Activated T-helper 2 cell treated with anti-CD3 and anti-CD28 coated beads, Interferon-gamma antibody, Interleukin-2, Interleukin-4, amounts not matched to agents 10 μg/mL and 5 μg/mL and 100 μg/mL, durations not matched to agents 14 hours and 24 hours and 36 hours (primary cell): ENCODE measurements at regions of chr4 and their contacts with region 1.

Region 1: GRCh38 chr4:113328514-113328913 is 279.1 kb downstream of the ANK2 start:
- DNase-seq: no peak
- H3K4me3 Mint-ChIP-seq: no peak overlapping the region
- H3K27ac Mint-ChIP-seq: no peak overlapping the region
- H3K4me1 Mint-ChIP-seq: peaks cover 4% of the 10 kb centered on the region
- H3K27me3 Mint-ChIP-seq: peaks cover 24% of the 10 kb centered on the region

Region 2: DNA sequence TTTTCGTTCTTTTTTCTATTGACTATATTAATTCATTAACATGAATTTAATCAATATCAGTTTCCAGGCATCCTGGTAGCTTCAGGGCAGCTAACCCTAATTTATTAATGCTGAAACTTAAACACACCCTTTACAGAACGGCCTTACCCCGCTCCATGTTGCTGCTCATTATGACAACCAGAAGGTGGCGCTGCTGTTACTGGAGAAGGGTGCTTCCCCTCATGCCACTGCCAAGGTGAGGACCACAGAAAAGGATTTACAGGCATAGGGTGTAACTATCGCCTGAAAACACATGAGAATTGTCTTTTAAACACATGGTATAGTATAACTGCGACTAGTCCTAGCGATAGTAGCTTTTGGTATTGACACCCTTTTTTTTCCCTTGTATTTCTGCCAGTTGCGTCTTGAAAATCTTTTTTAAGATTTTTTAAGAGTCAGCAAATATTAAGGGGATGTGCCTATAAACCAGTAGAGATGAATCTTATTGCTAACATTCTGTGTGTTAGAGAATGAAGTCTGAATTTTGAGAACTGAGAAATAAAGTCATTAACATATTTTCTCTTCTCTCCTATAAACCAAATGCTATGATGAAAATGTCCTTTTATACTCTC is 50.1 kb before region 1 on chr4:
- intact Hi-C with region 1: loop called (anchors 2 kb)
- DNase-seq: peak; percentile 39
- H3K4me3 Mint-ChIP-seq: no peak overlapping the region
- H3K27ac Mint-ChIP-seq: no peak overlapping the region
- H3K4me1 Mint-ChIP-seq: no peaks in the 10 kb centered on the region
- H3K27me3 Mint-ChIP-seq: peaks cover 16% of the 10 kb centered on the region

Region 3: DNA sequence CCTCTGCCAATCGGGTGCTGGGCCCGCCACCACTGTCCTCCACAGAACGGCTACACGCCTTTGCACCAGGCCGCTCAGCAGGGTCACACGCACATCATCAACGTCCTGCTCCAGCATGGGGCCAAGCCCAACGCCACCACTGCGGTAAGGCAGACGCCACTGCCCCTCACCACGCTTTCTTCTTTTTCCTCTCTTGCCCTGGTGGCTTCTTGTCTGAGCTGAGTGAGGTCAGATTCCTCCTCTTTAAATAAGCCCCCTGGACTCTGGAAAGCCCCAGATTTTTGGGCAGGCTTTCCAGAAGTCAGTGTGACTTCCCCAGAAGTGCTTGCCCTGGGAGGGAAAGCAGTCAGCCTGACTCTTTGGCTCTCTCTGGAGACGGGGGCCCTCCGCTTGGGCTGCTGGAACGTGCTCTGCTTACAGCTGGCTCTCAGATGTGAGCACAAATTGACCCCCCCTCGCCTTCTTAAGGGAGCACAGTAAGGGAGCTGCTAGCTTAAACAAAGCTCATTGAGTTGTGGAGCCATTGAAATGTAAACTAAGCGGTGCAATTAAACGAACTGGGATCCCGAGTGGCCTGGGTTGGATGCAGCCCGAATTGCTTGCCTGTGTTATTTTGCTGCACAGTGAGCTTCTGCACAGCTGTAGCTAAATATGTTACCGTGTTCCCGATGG is 36.0 kb before region 1 on chr4:
- intact Hi-C with region 1: no loop called
- DNase-seq: no peak
- H3K4me3 Mint-ChIP-seq: no peak overlapping the region
- H3K27ac Mint-ChIP-seq: no peak overlapping the region
- H3K4me1 Mint-ChIP-seq: no peaks in the 10 kb centered on the region
- H3K27me3 Mint-ChIP-seq: peaks cover 16% of the 10 kb centered on the region